CD8-positive, alpha-beta T cell (primary cell): ENCODE measurements at regions of chr3 and their contacts with region 1.

Region 1: GRCh38 chr3:188154014-188154808 is at the start of gene LPP:
- DNase-seq: peak; percentile 60 to 93 (median 79)
- ATAC-seq: peak; percentile 84
- H3K4me3 ChIP-seq: peak within 1 kb of the TSS; percentile 72 to 81
- H3K4me3 Mint-ChIP-seq: peak within 1 kb of the TSS; percentile 88
- H3K27ac ChIP-seq: peak within 1 kb of the TSS; percentile 64 to 79
- H3K27ac Mint-ChIP-seq: peak within 1 kb of the TSS; percentile 90
- H3K4me1 ChIP-seq: peaks cover 27% of the 10 kb centered on the region
- H3K4me1 Mint-ChIP-seq: peaks cover 52% of the 10 kb centered on the region
- H3K27me3 ChIP-seq: no peaks in the 10 kb centered on the region
- H3K27me3 Mint-ChIP-seq: no peaks in the 10 kb centered on the region
- CTCF ChIP-seq: no peak
- total RNA-seq, gene LPP: 35.2 to 37.0 TPM

Region 2: GRCh38 chr3:187974871-187975271 is 179.3 kb before region 1 on chr3:
- CTCF ChIA-PET with region 1: no interaction called
- POLR2A ChIA-PET with region 1: interaction called, 3 read pairs
- intact Hi-C with region 1: loop called in 1 of 2 experiments (anchors 5 kb)
- DNase-seq: peak in 2 of 9 experiments; percentile 51 to 63
- ATAC-seq: peak; percentile 65
- H3K4me3 ChIP-seq: peak overlapping the region; percentile 8 to 13
- H3K4me3 Mint-ChIP-seq: peak overlapping the region; percentile 68
- H3K27ac ChIP-seq: peak overlapping the region in 1 of 2 experiments; percentile 56
- H3K27ac Mint-ChIP-seq: peak overlapping the region; percentile 79
- H3K4me1 ChIP-seq: peaks cover 34% of the 10 kb centered on the region
- H3K4me1 Mint-ChIP-seq: peaks cover 51% of the 10 kb centered on the region
- H3K27me3 ChIP-seq: no peaks in the 10 kb centered on the region
- H3K27me3 Mint-ChIP-seq: no peaks in the 10 kb centered on the region
- CTCF ChIP-seq: peak; percentile 58

Region 3: DNA sequence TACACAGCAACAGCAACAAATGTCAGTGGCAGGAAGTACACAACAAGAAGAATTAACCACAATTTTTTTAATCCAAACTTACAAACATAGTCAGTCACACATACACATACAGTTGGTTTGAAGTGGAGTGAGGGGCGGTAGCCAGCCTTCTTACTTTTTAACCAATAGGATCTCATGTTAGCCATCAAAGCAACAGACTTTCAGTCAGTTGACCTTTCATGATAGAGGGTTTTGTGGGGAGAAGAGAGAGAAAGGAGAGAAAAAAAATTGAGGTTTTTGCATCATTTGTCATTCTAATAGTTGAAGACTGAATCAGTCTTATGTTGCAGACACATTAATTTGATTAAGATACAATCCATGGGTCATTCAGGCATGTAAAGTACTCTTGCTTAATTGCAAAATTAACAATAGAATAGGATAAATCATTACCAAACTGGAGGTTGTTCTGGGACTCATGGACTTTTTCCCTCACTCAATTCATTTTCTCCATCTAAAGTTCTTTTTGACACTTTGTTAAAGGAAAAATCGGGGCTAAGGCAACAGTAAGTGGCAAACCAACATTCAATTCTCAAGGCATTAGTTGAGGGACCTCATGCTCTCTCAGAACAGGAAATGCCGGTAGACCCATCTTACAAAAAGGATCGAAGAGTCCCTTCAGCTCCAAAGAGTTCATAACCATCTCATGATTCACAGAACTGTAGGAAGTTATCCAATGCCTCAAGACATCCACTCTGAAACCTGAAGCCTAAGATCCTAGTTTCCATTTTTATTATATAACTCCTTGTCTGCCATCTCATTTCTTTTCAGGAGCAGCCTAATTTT is 159.8 kb before region 1 on chr3:
- CTCF ChIA-PET with region 1: no interaction called
- POLR2A ChIA-PET with region 1: no interaction called
- intact Hi-C with region 1: loop called (anchors 5 kb)
- DNase-seq: peak in 4 of 9 experiments; percentile 26 to 75 (median 52)
- ATAC-seq: peak; percentile 88
- H3K4me3 ChIP-seq: no peak overlapping the region
- H3K4me3 Mint-ChIP-seq: peak overlapping the region; percentile 2
- H3K27ac ChIP-seq: peak overlapping the region in 1 of 2 experiments; percentile 55
- H3K27ac Mint-ChIP-seq: peak overlapping the region; percentile 50
- H3K4me1 ChIP-seq: peaks cover 33% of the 10 kb centered on the region
- H3K4me1 Mint-ChIP-seq: peaks cover 78% of the 10 kb centered on the region
- H3K27me3 ChIP-seq: no peaks in the 10 kb centered on the region
- H3K27me3 Mint-ChIP-seq: no peaks in the 10 kb centered on the region
- CTCF ChIP-seq: no peak

Region 4: GRCh38 chr3:188169830-188170455 is 15.7 kb after region 1 on chr3:
- CTCF ChIA-PET with region 1: no interaction called
- POLR2A ChIA-PET with region 1: interaction called, 6 read pairs
- intact Hi-C with region 1: loop called in 1 of 2 experiments (anchors 2 kb)
- DNase-seq: no peak
- ATAC-seq: no peak
- H3K4me3 ChIP-seq: no peak overlapping the region
- H3K4me3 Mint-ChIP-seq: no peak overlapping the region
- H3K27ac ChIP-seq: no peak overlapping the region
- H3K27ac Mint-ChIP-seq: peak overlapping the region; percentile 79
- H3K4me1 ChIP-seq: peaks cover 5% of the 10 kb centered on the region
- H3K4me1 Mint-ChIP-seq: peaks cover 43% of the 10 kb centered on the region
- H3K27me3 ChIP-seq: no peaks in the 10 kb centered on the region
- H3K27me3 Mint-ChIP-seq: no peaks in the 10 kb centered on the region
- CTCF ChIP-seq: no peak

Region 5: GRCh38 chr3:188212308-188212969 is 58.2 kb after region 1 on chr3:
- CTCF ChIA-PET with region 1: no interaction called
- POLR2A ChIA-PET with region 1: no interaction called
- intact Hi-C with region 1: no loop called
- DNase-seq: no peak
- ATAC-seq: no peak
- H3K4me3 ChIP-seq: no peak overlapping the region
- H3K4me3 Mint-ChIP-seq: no peak overlapping the region
- H3K27ac ChIP-seq: no peak overlapping the region
- H3K27ac Mint-ChIP-seq: no peak overlapping the region
- H3K4me1 ChIP-seq: no peaks in the 10 kb centered on the region
- H3K4me1 Mint-ChIP-seq: peaks cover 23% of the 10 kb centered on the region
- H3K27me3 ChIP-seq: no peaks in the 10 kb centered on the region
- H3K27me3 Mint-ChIP-seq: no peaks in the 10 kb centered on the region
- CTCF ChIP-seq: no peak

Region 6: DNA sequence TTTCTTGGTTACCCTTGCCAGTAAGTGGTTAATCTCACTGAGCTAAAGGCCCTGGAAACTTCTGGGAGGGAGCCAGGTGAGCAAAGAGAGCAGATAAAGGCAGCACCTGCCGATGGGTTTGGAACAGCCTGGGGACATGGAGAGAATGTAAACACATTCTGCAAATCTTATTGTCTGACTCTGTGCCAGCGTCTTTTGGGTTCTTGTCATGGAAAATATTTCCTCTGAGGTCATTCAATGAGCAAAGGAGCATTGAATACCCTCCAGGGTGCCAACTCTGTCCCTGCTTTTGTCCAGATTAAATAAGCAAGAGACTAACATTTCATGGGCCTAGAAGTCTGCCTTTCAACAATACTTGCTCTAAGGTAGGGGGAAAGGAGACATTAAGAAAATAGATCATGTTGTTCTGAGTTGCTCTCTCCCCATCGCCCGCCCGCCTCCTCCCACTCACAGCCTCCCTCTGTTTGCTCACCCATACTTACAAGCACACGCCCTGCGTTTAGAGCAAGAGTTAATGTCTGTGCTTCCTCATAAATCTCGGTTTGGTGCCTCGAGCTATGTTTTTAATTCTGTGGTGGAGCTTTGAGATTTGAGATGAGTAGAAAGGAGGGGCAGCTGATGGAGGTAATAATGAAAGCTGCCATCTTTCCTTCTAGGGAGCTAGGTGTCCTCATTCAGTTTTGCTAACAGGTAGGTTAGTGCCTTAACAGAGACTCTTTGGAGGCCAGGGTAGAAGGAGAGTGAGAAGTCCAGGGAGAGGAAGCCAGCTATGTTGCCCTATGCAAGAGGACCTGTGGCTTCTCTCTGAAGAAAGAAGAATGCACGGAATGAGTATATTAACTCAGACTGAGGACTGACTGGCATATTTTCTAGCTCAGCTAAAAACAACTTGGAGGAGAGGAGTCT is 1150.5 kb after region 1 on chr3:
- CTCF ChIA-PET with region 1: no interaction called
- POLR2A ChIA-PET with region 1: no interaction called
- intact Hi-C with region 1: no loop called
- DNase-seq: no peak
- ATAC-seq: no peak
- H3K4me3 ChIP-seq: no peak overlapping the region
- H3K4me3 Mint-ChIP-seq: no peak overlapping the region
- H3K27ac ChIP-seq: no peak overlapping the region
- H3K27ac Mint-ChIP-seq: peak overlapping the region; percentile 12
- H3K4me1 ChIP-seq: no peaks in the 10 kb centered on the region
- H3K4me1 Mint-ChIP-seq: peaks cover 29% of the 10 kb centered on the region
- H3K27me3 ChIP-seq: no peaks in the 10 kb centered on the region
- H3K27me3 Mint-ChIP-seq: no peaks in the 10 kb centered on the region
- CTCF ChIP-seq: no peak